Activated T-helper 1 cell treated with anti-CD3 and anti-CD28 coated beads, Interleukin-12 subunit alpha, Interleukin-12 subunit beta, Interleukin-2, Interleukin-4 antibody, amounts not matched to agents 30 ng/mL and 10 ng/mL and 1 ng/mL, durations not matched to agents 14 hours and 24 hours and 36 hours (primary cell): ENCODE measurements at regions of chr7 and their contacts with region 1.

Region 1: GRCh38 chr7:142811154-142811737 is 40.5 kb downstream of the PRSS2 start:
- DNase-seq: no peak
- H3K4me3 Mint-ChIP-seq: peak overlapping the region; percentile 79
- H3K27ac Mint-ChIP-seq: peak overlapping the region; percentile 99
- H3K4me1 Mint-ChIP-seq: peaks cover 80% of the 10 kb centered on the region
- H3K27me3 Mint-ChIP-seq: peaks cover 2% of the 10 kb centered on the region

Region 2: DNA sequence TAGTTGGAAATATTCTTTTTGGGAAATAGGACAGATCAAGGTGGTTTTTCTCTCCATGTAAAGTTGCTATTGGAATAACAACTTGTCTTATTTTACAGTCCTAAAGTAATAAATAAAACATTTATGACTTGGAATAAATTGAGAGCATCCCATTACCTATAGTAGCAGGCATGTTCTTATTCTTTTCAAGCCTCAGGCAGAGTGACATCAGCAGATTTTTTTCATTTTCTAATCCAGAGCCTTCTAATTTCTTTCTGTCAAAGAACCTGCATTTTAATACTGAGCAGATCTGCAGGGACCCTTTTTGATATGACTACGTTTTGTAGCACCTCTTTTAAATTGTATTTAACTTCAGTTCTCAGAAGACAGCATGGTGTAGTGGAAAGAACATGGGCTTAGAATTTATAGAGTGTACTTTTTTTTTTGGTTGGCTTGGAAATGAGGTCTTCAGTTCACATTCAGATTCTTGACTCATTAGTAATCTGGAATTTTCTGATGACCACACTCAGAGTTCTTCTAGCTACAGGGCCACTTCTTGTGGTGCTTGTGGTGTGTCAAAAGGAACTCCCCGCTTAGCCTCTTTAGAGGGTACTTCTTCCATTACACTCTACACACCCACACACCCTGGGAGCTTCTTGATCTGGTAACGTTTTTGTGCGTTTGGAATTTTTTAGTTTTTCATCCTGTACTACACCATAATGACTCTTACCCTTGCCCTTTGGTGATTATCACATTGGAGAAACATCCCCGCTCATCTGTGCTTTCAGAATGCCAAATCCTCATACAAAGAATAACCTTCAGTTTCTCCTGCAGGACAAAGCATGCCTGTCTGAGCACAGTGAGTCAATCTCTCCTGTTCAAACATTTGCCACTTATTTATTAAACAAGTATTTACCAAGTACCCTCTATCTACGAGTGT is 1225.4 kb before region 1 on chr7:
- intact Hi-C with region 1: loop called (anchors 5 kb)
- DNase-seq: no peak
- H3K4me3 Mint-ChIP-seq: peak overlapping the region; percentile 75
- H3K27ac Mint-ChIP-seq: peak overlapping the region; percentile 94
- H3K4me1 Mint-ChIP-seq: peaks cover 74% of the 10 kb centered on the region
- H3K27me3 Mint-ChIP-seq: no peaks in the 10 kb centered on the region

Region 3: GRCh38 chr7:142323706-142324105 is 487.5 kb before region 1 on chr7:
- intact Hi-C with region 1: loop called (anchors 1 kb)
- DNase-seq: no peak
- H3K4me3 Mint-ChIP-seq: no peak overlapping the region
- H3K27ac Mint-ChIP-seq: no peak overlapping the region
- H3K4me1 Mint-ChIP-seq: no peaks in the 10 kb centered on the region
- H3K27me3 Mint-ChIP-seq: peaks cover 5% of the 10 kb centered on the region

Region 4: GRCh38 chr7:142557971-142558582 is 253.2 kb before region 1 on chr7:
- intact Hi-C with region 1: loop called (anchors 1 kb)
- DNase-seq: peak; percentile 29
- H3K4me3 Mint-ChIP-seq: peak overlapping the region; percentile 78
- H3K27ac Mint-ChIP-seq: peak overlapping the region; percentile 35
- H3K4me1 Mint-ChIP-seq: peaks cover 30% of the 10 kb centered on the region
- H3K27me3 Mint-ChIP-seq: peaks cover 2% of the 10 kb centered on the region

Region 5: DNA sequence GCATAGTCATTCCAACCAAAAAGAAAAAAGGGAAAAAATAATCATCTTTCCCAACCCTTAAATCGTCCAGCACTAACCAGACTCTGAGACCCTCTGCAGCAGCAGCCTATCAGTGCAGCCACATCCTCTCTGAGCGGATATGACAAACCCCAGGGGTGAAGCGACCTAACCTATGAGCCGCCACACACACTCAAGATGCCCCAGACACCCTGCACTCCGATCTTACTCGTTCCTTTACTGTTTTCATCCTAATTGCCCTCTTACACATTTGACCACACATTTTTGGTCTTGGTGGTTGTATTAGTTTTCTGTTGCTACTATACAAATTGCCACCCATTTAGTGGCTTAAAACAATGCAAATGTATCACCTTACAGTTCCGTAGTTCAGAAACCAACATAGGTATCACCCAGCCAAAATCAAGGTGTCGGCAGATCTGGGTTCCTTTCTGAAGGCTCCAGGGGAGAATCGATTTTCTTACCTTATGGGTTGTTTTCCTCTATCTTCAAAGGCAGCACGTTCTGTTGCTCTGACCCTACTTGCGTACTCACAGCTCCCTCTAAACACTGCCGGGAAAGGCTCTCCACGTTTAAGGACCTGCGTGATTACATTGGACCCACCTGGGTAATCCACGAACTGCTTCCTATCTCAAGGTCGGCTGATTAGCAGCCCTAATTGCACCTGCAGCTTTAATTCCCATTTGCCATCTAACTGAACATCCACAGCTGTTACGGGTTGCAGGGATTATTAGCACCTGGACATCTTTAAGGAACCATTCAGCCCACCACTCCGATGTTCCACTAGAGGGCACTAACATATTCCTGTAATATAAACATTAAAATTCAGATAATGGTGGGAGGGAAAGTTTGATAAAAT is 99.3 kb before region 1 on chr7:
- intact Hi-C with region 1: loop called (anchors 2 kb)
- DNase-seq: peak; percentile 2
- H3K4me3 Mint-ChIP-seq: peak overlapping the region; percentile 78
- H3K27ac Mint-ChIP-seq: peak overlapping the region; percentile 85
- H3K4me1 Mint-ChIP-seq: peaks cover 66% of the 10 kb centered on the region
- H3K27me3 Mint-ChIP-seq: no peaks in the 10 kb centered on the region

Region 6: DNA sequence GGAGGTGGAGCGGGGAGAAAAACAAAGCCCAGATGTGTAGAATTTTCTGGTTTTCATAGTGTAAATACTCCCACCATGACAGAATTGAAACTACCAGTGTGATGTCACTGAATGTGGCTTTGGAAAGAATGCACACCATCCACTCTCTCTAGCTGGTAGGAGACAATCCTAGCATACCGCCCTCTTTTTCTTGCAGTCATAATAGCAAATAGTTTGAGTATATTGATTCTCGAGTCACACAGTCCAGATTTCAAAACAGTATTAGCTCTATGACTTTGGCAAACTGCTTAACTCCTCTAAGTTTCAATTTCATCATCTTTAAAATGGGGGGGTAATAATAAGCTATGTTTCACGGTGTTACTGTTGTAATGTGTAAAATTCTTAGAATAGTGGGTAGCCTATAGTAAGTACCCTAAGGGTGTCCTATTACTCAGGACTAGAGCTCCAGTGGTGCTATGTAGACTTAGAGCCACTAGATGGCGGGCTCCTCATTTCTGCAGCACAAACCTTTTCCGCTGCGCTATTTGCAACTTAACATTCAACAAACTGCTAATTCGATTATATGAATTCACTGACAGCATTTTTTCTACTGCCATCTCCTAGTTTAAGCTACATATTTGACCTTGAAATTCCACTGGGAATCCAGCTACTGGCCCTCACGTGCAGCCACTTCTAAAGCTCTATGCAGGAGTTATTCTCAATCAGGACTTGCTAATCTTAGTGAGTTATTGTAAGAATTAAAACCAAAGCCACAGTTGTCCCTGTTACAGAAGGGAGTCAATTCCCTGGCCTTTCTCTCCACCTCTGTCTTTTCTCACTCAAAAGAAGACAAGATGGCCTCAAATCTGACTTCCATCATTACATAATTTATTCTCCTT is 429.3 kb after region 1 on chr7:
- intact Hi-C with region 1: loop called (anchors 1 kb)
- DNase-seq: peak; percentile 65
- H3K4me3 Mint-ChIP-seq: no peak overlapping the region
- H3K27ac Mint-ChIP-seq: peak overlapping the region; percentile 74
- H3K4me1 Mint-ChIP-seq: peaks cover 54% of the 10 kb centered on the region
- H3K27me3 Mint-ChIP-seq: peaks cover 8% of the 10 kb centered on the region